Activated CD8-positive, alpha-beta T cell treated with anti-CD3 and anti-CD28 coated beads for 36 hours (primary cell): ENCODE measurements at regions of chrX and their contacts with region 1.

Region 1: DNA sequence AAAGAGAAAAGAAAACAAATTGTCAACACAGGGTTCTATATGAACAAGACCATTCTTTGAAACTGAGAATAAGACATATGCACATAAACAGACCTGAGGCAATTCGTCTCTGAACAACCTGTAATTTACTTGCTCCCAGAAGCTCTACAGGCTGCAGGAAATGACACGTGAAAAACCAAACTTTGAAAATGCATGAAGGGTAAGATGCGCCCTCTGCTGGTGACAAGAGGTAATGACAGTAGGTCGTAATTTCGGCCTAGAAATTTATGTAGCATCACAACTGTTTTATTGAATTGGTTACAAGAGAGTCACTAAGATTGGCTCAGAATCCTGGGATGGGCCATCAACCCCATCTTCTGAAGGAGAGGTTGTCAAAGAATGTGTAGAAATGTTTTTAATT is 276.5 kb downstream of the PPP4R3C start:
- DNase-seq: peak; percentile 24
- ATAC-seq: no peak
- H3K4me3 Mint-ChIP-seq: no peak overlapping the region
- H3K27ac Mint-ChIP-seq: no peak overlapping the region
- H3K4me1 Mint-ChIP-seq: no peaks in the 10 kb centered on the region
- H3K27me3 Mint-ChIP-seq: no peaks in the 10 kb centered on the region
- CTCF ChIP-seq: peak; percentile 38

Region 2: DNA sequence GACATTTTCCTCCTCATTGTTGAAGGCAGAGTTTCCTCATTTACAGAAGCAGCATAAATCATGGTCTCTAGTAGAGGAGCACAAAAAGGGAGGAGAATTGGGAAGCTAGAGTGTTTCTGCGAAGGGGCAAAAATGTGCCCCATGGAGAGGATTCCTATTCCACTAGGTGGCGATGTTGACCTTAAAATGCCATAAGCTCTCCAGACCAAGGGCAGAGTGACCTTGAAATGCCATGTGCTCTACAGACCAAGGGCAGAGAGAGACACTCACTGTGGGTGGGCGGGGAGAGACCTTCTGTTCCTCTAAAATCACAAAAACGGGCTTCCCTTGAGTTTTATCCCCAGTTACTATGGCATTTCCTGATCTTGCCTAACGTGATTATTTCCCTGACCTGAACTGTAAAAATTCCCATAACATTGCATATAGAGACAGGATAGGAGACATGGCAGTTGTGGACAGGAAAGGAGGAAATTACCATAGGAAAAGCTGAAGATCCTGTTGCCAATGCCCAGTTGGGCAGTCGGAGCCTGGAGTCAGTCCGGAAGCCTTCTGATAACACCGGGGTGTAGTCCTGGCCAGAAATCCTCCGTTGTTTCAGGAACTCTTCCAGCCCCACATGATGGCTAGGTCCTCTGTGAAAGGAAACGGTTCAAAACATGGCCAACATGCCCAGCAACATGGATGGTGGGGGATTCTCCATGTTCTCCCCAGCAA is 403.0 kb before region 1 on chrX:
- CTCF ChIA-PET with region 1: interaction called, 3 read pairs
- POLR2A ChIA-PET with region 1: no interaction called
- intact Hi-C with region 1: loop called (anchors 10 kb)
- DNase-seq: peak; percentile 8
- ATAC-seq: no peak
- H3K4me3 Mint-ChIP-seq: no peak overlapping the region
- H3K27ac Mint-ChIP-seq: no peak overlapping the region
- H3K4me1 Mint-ChIP-seq: no peaks in the 10 kb centered on the region
- H3K27me3 Mint-ChIP-seq: no peaks in the 10 kb centered on the region
- CTCF ChIP-seq: no peak